Breast epithelium (tissue), 4 donors: ENCODE measurements at regions of chr19 and their contacts with region 1.

Region 1: GRCh38 chr19:34241513-34242337 is 12.6 kb upstream of the GARRE1 start:
- DNase-seq: peak in 1 of 2 donors; percentile 66
- H3K4me3 ChIP-seq: no peak overlapping the region
- H3K27ac ChIP-seq: no peak overlapping the region
- H3K4me1 ChIP-seq: no peaks in the 10 kb centered on the region
- H3K27me3 ChIP-seq: no peaks in the 10 kb centered on the region
- CTCF ChIP-seq: peak in 2 of 3 donors; percentile 31 to 34
- POLR2A ChIP-seq: no peak

Region 2: GRCh38 chr19:34345947-34346351 is 104.2 kb after region 1 on chr19:
- intact Hi-C with region 1: loop called (anchors 10 kb)
- DNase-seq: no peak
- H3K4me3 ChIP-seq: no peak overlapping the region
- H3K27ac ChIP-seq: no peak overlapping the region
- H3K4me1 ChIP-seq: no peaks in the 10 kb centered on the region
- H3K27me3 ChIP-seq: no peaks in the 10 kb centered on the region
- CTCF ChIP-seq: peak in 2 of 3 donors; percentile 42 to 58
- POLR2A ChIP-seq: no peak